ENCODE measurements at regions of chr6 and their contacts with region 1.

Region 1: GRCh38 chr6:5956939-5957338 is 49.8 kb downstream of the NRN1 start:
- DNase-seq: no peak
- ATAC-seq: no peak
- H3K4me3 ChIP-seq: no peak overlapping the region
- H3K4me3 Mint-ChIP-seq: no peak overlapping the region
- H3K27ac ChIP-seq: no peak overlapping the region
- H3K27ac Mint-ChIP-seq: no peak overlapping the region
- H3K4me1 ChIP-seq: no peaks in the 10 kb centered on the region
- H3K4me1 Mint-ChIP-seq: no peaks in the 10 kb centered on the region
- H3K27me3 ChIP-seq: no peaks in the 10 kb centered on the region
- H3K27me3 Mint-ChIP-seq: peaks cover 0 to 39% (median 9%) of the 10 kb centered on the region in 5 donors

Region 2: GRCh38 chr6:5989141-5989723 is 32.3 kb after region 1 on chr6:
- CTCF ChIA-PET with region 1: no interaction called
- POLR2A ChIA-PET with region 1: interaction called, 11 read pairs
- intact Hi-C with region 1: no loop called
- DNase-seq: no peak
- ATAC-seq: peak; percentile 65
- H3K4me3 ChIP-seq: no peak overlapping the region
- H3K4me3 Mint-ChIP-seq: no peak overlapping the region
- H3K27ac ChIP-seq: no peak overlapping the region
- H3K27ac Mint-ChIP-seq: no peak overlapping the region
- H3K4me1 ChIP-seq: peaks cover 0 to 12% of the 10 kb centered on the region in 2 donors
- H3K4me1 Mint-ChIP-seq: peaks cover 4 to 41% (median 21%) of the 10 kb centered on the region in 7 donors
- H3K27me3 ChIP-seq: peaks cover 6 to 17% of the 10 kb centered on the region in 2 donors
- H3K27me3 Mint-ChIP-seq: peaks cover 39 to 51% (median 43%) of the 10 kb centered on the region in 5 donors

Measured in naive thymus-derived CD4-positive, alpha-beta T cell (primary cell).